GM12878 (cell line): ENCODE measurements at regions of chr2 and their contacts with region 1.

Region 1: DNA sequence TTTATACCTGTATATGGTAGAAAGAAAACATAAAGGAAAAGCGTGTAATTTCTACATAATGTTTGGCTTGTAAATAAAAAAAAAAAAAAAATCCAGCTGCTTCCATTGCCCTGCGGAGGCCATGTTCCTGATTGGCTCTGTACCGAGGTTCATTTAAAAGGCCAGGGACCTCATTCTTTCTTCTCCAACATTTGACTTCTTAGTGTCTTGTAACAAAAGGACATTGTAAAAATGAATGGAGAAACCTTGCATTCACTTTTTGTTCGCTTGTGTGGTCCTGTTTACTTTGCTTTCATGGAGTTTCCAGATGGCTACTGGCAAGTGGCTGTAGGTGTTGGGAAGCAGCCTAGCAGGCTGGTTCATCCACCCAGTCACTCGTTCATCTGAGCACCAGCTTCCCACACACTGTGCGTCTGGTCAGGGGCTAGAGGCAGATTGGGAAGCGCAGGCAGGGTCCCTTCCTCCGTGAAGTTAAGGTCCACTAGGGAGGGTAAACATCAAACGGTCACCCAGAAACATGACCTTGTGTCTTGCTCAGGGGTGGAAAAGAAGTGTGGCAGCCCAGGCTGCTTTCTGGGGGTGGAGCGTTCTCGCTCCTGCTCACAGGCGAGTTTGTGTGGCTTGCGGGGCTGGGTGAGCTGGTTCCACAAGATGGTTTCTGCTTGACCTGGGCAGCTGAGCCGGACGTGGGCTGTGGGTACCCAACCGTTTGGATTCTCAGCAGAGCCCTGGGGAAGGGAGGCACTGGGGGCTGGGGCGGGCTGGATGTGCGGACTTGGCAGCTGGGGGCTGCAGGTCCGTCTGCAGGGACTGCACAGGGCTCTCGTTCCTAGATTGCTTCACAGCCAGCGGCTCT is 260.7 kb downstream of the AGAP1 start:
- DNase-seq: no peak
- ATAC-seq: no peak
- H3K4me3 ChIP-seq: no peak overlapping the region
- H3K27ac ChIP-seq: no peak overlapping the region
- H3K4me1 ChIP-seq: no peaks in the 10 kb centered on the region
- H3K27me3 ChIP-seq: peaks cover 0 to 2% of the 10 kb centered on the region in 2 experiments; a peak in 2 of 4 replicates
- CTCF ChIP-seq: no peak
- EP300 ChIP-seq: no peak
- POLR2A ChIP-seq: no peak
- RAD21 ChIP-seq: no peak

Region 2: DNA sequence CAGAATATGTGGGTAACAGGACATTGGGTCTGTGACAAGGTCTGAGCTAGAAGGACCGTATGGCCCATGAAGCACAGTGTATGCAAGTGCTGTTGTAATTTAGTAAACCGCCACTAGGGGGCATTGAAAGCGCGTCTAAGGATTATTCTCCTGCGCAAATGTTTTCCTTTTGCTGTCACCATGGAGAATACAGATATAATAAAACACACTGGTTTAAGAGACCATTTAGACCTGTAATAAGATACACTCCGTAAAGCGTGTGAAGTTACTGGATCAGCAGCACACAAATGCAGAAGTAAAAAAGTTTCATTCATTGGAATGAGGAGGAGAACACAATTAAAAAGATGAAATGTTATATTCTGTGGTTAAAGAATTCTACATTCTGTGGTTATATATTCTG is 11.7 kb after region 1 on chr2:
- CTCF ChIA-PET with region 1: interaction called, 14 read pairs
- POLR2A ChIA-PET with region 1: no interaction called
- RAD21 ChIA-PET with region 1: no interaction called
- SMC1A ChIA-PET with region 1: no interaction called
- in situ Hi-C with region 1: no loop called
- intact Hi-C with region 1: no loop called
- DNase-seq: no peak
- ATAC-seq: peak; percentile 94
- H3K4me3 ChIP-seq: no peak overlapping the region
- H3K27ac ChIP-seq: no peak overlapping the region
- H3K4me1 ChIP-seq: no peaks in the 10 kb centered on the region
- H3K27me3 ChIP-seq: no peaks in the 10 kb centered on the region
- CTCF ChIP-seq: peak; percentile 68 to 82 (median 80)
- EP300 ChIP-seq: no peak
- POLR2A ChIP-seq: no peak
- RAD21 ChIP-seq: peak; percentile 72

Region 3: GRCh38 chr2:235864733-235865515 is 110.3 kb after region 1 on chr2:
- CTCF ChIA-PET with region 1: no interaction called
- POLR2A ChIA-PET with region 1: no interaction called
- RAD21 ChIA-PET with region 1: no interaction called
- SMC1A ChIA-PET with region 1: no interaction called
- in situ Hi-C with region 1: no loop called
- intact Hi-C with region 1: no loop called
- DNase-seq: no peak
- ATAC-seq: no peak
- H3K4me3 ChIP-seq: no peak overlapping the region
- H3K27ac ChIP-seq: no peak overlapping the region
- H3K4me1 ChIP-seq: no peaks in the 10 kb centered on the region
- H3K27me3 ChIP-seq: no peaks in the 10 kb centered on the region; a peak in 1 of 4 replicates
- CTCF ChIP-seq: no peak
- EP300 ChIP-seq: no peak
- POLR2A ChIP-seq: no peak
- RAD21 ChIP-seq: no peak